Gastrocnemius medialis (tissue), 4 donors: ENCODE measurements at regions of chr11 and their contacts with region 1.

Region 1: GRCh38 chr11:123407130-123407995 is 22.7 kb upstream of the GRAMD1B start:
- DNase-seq: peak; percentile 60
- ATAC-seq: peak; percentile 74 to 89
- H3K4me3 ChIP-seq: peak overlapping the region in 1 of 4 donors; percentile 23
- H3K27ac ChIP-seq: no peak overlapping the region
- H3K4me1 ChIP-seq: peaks cover 5 to 12% of the 10 kb centered on the region in 2 donors
- H3K27me3 ChIP-seq: no peaks in the 10 kb centered on the region
- CTCF ChIP-seq: peak; percentile 47 to 77 (median 74)
- POLR2A ChIP-seq: no peak

Region 2: DNA sequence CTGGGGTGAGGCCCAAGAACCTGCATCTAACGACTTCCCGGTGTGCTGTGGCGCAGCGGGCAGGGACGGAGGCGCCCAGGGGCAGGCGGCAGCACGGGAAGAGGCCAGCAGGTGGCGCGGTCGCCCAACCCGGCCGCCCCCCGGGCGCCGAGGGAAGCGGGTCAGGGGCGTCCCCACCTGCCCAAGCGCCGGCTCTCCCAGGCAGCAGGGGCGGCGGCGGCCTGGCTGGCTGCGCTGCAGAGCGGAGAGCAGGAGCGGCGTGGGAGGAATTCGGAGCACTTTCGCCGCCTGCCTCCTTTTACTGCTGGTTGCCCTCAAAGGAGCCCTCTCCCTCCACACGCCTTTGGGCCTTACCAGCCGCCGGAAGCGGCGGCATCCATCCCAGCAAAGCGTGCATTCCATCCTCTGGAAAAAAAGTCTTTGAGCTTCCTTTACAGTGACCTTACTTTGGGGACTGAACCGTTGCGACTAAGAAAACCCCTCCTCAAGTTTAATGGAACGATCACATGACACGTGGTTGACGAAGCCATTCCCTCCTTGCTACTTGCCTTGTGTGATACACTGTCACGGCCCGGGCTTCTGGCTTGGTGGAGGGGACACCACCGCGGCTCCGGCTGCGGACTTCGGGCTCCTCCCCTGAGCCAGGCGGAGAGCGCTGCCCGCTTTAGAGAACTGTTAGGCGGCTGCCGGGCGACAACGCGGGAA is 105.5 kb before region 1 on chr11:
- in situ Hi-C with region 1: loop called in 1 of 4 experiments (anchors 5 kb)
- intact Hi-C with region 1: loop called (anchors 1 kb)
- DNase-seq: peak; percentile 15 to 30
- ATAC-seq: peak; percentile 61 to 72
- H3K4me3 ChIP-seq: peak overlapping the region; percentile 38 to 60 (median 52)
- H3K27ac ChIP-seq: no peak overlapping the region
- H3K4me1 ChIP-seq: peaks cover 11 to 18% of the 10 kb centered on the region in 2 donors
- H3K27me3 ChIP-seq: no peaks in the 10 kb centered on the region
- CTCF ChIP-seq: peak; percentile 74 to 97 (median 89)
- POLR2A ChIP-seq: no peak